ENCODE measurements at regions of chr10 and their contacts with region 1.

Region 1: GRCh38 chr10:124916585-124917427 is 25.1 kb upstream of the ZRANB1 start:
- DNase-seq: peak; percentile 98
- ATAC-seq: peak; percentile 92
- H3K4me3 Mint-ChIP-seq: peak overlapping the region; percentile 84
- H3K27ac Mint-ChIP-seq: peak overlapping the region; percentile 90
- H3K4me1 Mint-ChIP-seq: peaks cover 37% of the 10 kb centered on the region
- H3K27me3 Mint-ChIP-seq: peaks cover 2% of the 10 kb centered on the region
- CTCF ChIP-seq: no peak

Region 2: DNA sequence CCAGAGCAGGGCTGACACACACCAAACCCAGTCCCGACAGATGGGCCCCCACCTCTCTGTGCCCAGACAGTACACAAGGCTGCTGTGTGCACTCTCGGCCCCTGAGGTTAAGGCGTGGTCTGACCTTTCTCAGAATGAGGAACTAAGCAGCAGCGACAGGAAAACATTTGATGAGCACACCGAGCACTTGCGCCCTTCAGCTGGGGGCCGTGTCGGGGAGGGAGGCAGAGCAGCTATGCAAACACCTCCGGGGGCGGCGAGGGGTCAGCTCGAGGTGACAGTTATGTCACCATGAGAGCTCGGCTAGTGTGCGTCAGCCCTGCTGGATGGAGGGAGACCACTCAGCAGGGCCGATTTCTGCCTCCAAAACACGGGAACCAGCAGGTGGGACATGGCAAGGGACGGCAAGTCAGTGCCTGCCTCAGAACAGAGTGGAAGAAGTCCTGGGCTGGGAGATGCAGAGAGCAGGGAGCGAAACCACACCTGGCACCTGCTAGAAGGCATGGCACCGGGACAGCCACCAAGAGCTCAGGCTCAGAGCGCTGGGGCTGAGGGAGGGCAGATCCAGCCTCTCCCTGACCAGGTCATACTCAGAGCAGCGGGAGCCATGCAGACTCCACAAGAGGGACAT is 880.8 kb before region 1 on chr10:
- CTCF ChIA-PET with region 1: no interaction called
- POLR2A ChIA-PET with region 1: no interaction called
- intact Hi-C with region 1: loop called (anchors 1 kb)
- DNase-seq: peak; percentile 75
- ATAC-seq: peak; percentile 93
- H3K4me3 Mint-ChIP-seq: peak overlapping the region; percentile 85
- H3K27ac Mint-ChIP-seq: peak overlapping the region; percentile 95
- H3K4me1 Mint-ChIP-seq: peaks cover 26% of the 10 kb centered on the region
- H3K27me3 Mint-ChIP-seq: no peaks in the 10 kb centered on the region
- CTCF ChIP-seq: no peak

Region 3: GRCh38 chr10:124450012-124450781 is 466.6 kb before region 1 on chr10 and contains the start of gene NKX1-2:
- CTCF ChIA-PET with region 1: no interaction called
- POLR2A ChIA-PET with region 1: no interaction called
- intact Hi-C with region 1: no loop called
- DNase-seq: no peak
- ATAC-seq: peak; percentile 28
- H3K4me3 Mint-ChIP-seq: peak within 1 kb of the TSS; percentile 62
- H3K27ac Mint-ChIP-seq: no peak within 1 kb of the TSS
- H3K4me1 Mint-ChIP-seq: peaks cover 33% of the 10 kb centered on the region
- H3K27me3 Mint-ChIP-seq: peaks cover 71% of the 10 kb centered on the region
- CTCF ChIP-seq: no peak
- total RNA-seq, gene NKX1-2: not detected in 2 replicates

Region 4: DNA sequence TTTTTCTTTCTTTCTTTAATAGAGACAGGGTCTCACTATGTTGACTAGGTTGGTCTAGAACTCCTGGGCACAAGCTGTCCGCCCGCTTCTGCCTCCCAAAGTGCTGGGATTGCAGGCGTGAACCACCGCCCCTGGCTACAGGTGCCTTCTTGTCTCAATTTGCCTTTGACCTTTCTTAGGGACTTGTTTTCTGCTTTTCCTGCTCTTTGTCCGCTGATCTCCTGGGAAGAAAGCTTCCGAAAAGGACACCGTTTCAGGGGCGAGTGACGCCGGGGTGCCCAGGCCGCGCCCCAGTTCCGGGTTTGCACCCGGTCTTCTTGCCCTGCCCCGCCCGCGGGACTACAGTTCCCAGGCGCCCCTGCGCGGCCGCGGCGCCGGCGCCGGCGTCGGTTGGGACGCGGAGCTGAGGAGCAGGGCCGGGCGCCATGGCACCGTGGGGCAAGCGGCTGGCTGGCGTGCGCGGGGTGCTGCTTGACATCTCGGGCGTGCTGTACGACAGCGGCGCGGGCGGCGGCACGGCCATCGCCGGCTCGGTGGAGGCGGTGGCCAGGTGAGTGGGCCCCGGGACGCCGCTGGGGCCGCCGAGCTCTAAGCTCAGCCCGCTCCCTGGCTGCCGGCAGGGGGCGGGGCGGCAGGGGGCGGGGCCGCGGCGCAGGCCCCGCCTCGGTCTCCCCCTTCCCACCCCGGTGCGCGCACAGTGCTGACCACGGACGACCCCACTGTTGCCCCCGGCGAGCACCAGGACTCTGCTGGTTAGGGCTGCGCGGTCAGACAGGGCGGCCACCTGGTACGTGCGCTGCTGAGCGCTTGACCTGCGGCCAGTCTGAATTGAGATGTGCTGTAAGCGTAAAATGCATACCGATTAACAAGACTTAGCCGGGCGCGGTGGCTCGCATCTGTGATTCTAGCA is 455.1 kb before region 1 on chr10 and contains the start of gene LHPP:
- CTCF ChIA-PET with region 1: no interaction called
- POLR2A ChIA-PET with region 1: interaction called, 3 read pairs
- intact Hi-C with region 1: loop called (anchors 1 kb)
- DNase-seq: peak; percentile 91
- ATAC-seq: peak; percentile 92
- H3K4me3 Mint-ChIP-seq: peak within 1 kb of the TSS; percentile 92
- H3K27ac Mint-ChIP-seq: peak within 1 kb of the TSS; percentile 95
- H3K4me1 Mint-ChIP-seq: peaks cover 32% of the 10 kb centered on the region
- H3K27me3 Mint-ChIP-seq: peaks cover 4% of the 10 kb centered on the region
- CTCF ChIP-seq: no peak
- total RNA-seq, gene LHPP: 21.0 and 22.9 TPM in 2 replicates

Region 5: DNA sequence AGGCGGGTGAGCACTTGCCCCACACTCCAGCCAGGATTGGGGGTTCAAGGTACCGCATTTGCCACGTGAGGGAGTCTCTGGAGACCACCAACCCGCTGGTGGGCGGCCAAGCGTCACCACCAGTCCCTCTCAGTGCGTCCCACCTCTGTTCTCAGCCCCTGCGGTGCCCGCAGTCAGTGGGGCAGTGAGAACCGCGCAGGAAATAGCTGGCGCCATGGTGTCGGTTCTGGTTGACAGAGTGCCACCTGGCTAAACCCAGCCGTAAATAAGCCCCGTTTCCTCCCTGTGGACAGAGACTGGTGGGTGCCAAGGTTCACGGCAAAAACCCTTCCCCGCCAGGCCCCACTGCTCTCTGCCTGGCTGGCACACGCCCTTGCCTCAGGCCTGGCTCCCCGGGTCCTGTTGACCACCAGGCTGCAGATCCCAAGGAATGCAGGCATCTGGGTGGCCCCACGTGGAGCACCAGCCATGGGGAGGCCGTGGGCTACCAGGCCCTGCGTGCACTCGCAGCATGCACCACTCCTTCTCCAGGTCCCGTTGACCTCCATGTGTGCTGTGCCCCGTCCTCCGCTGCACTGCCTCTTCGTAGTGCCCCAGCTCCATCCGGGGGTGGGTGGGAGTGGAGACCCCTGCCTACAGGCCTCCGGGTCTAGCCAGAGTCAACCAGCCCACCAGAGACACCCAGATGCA is 315.2 kb before region 1 on chr10:
- CTCF ChIA-PET with region 1: no interaction called
- POLR2A ChIA-PET with region 1: no interaction called
- intact Hi-C with region 1: no loop called
- DNase-seq: peak; percentile 75
- ATAC-seq: peak; percentile 86
- H3K4me3 Mint-ChIP-seq: peak overlapping the region; percentile 70
- H3K27ac Mint-ChIP-seq: peak overlapping the region; percentile 94
- H3K4me1 Mint-ChIP-seq: peaks cover 97% of the 10 kb centered on the region
- H3K27me3 Mint-ChIP-seq: no peaks in the 10 kb centered on the region
- CTCF ChIP-seq: no peak

Region 6: GRCh38 chr10:124791378-124792348 is 125.1 kb before region 1 on chr10 and contains the start of gene EEF1AKMT2:
- CTCF ChIA-PET with region 1: no interaction called
- POLR2A ChIA-PET with region 1: interaction called, 11 read pairs
- intact Hi-C with region 1: loop called (anchors 1 kb)
- DNase-seq: peak; percentile 85
- ATAC-seq: peak; percentile 95
- H3K4me3 Mint-ChIP-seq: peak within 1 kb of the TSS; percentile 96
- H3K27ac Mint-ChIP-seq: peak within 1 kb of the TSS; percentile 91
- H3K4me1 Mint-ChIP-seq: peaks cover 25% of the 10 kb centered on the region
- H3K27me3 Mint-ChIP-seq: no peaks in the 10 kb centered on the region
- CTCF ChIP-seq: no peak
- total RNA-seq, gene EEF1AKMT2: 16.5 and 17.0 TPM in 2 replicates

Region 7: DNA sequence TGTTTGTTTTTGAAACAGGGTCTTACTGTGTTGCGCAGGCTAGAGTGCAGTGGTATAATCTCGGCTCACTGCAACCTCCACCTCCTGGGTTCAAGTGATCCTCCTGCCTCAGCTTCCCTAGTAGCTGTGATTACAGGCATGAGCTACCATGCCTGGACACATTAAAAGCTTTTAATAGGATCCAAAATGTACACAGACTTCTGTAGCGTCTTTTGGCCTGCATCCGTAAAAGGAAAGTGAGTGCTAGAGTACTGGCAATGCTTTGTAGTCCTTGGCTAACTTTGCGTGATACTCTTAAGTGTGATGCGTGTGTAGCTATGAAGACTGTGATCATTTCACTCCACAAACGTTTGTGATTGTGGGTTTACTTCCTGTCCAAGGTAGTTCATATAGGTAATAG is 38.4 kb after region 1 on chr10:
- CTCF ChIA-PET with region 1: no interaction called
- POLR2A ChIA-PET with region 1: no interaction called
- intact Hi-C with region 1: loop called (anchors 5 kb)
- DNase-seq: no peak
- ATAC-seq: no peak
- H3K4me3 Mint-ChIP-seq: no peak overlapping the region
- H3K27ac Mint-ChIP-seq: no peak overlapping the region
- H3K4me1 Mint-ChIP-seq: peaks cover 49% of the 10 kb centered on the region
- H3K27me3 Mint-ChIP-seq: no peaks in the 10 kb centered on the region
- CTCF ChIP-seq: no peak

Region 8: GRCh38 chr10:125084191-125084613 is 167.4 kb after region 1 on chr10:
- CTCF ChIA-PET with region 1: no interaction called
- POLR2A ChIA-PET with region 1: no interaction called
- intact Hi-C with region 1: no loop called
- DNase-seq: no peak
- ATAC-seq: no peak
- H3K4me3 Mint-ChIP-seq: no peak overlapping the region
- H3K27ac Mint-ChIP-seq: no peak overlapping the region
- H3K4me1 Mint-ChIP-seq: no peaks in the 10 kb centered on the region
- H3K27me3 Mint-ChIP-seq: peaks cover 57% of the 10 kb centered on the region
- CTCF ChIP-seq: no peak

Region 9: GRCh38 chr10:125248489-125248888 is 331.7 kb after region 1 on chr10:
- CTCF ChIA-PET with region 1: no interaction called
- POLR2A ChIA-PET with region 1: no interaction called
- intact Hi-C with region 1: no loop called
- DNase-seq: no peak
- ATAC-seq: no peak
- H3K4me3 Mint-ChIP-seq: no peak overlapping the region
- H3K27ac Mint-ChIP-seq: no peak overlapping the region
- H3K4me1 Mint-ChIP-seq: no peaks in the 10 kb centered on the region
- H3K27me3 Mint-ChIP-seq: no peaks in the 10 kb centered on the region
- CTCF ChIP-seq: no peak

Region 10: DNA sequence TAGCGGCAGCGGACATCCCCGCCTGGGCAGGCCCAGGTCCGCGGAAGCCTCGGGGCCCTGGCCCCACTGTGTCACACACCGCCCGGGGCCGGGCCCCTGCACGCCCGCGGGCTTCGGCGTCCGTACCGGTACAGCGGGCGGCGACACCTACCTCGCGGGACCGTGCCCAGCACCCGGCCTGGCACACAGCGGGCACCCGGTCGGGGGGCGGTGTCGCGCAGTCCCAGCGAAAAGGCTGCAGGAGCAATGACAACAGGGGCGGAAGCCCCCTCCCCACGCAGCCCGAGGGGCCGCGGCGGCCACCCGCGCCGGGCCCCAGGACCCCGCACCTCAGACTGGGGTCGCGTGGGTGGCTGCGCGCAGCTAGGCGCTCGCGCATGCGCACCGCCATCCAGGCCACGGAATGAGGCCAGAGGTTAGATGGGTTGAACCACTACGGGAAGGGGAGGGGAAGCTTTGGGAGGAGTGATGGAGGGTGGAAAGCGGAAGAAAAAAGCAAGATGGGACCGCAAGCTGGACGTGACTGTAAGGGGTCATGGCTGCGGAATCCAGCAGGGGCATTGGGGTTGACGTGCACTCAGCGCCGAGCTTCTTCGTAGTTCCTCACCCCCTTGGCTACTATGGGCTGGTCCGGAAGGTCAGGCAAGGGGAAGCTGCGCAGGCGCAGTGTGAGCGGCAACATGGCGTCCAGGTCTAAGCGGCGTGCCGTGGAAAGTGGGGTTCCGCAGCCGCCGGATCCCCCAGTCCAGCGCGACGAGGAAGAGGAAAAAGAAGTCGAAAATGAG is 906.3 kb after region 1 on chr10 and contains the starts of genes BCCIP and UROS:
- CTCF ChIA-PET with region 1: no interaction called
- POLR2A ChIA-PET with region 1: no interaction called
- intact Hi-C with region 1: loop called (anchors 5 kb)
- DNase-seq: peak; percentile 86
- ATAC-seq: peak; percentile 87
- H3K4me3 Mint-ChIP-seq: peak within 1 kb of the TSS; percentile 78
- H3K27ac Mint-ChIP-seq: peak within 1 kb of the TSS; percentile 46
- H3K4me1 Mint-ChIP-seq: peaks cover 36% of the 10 kb centered on the region
- H3K27me3 Mint-ChIP-seq: no peaks in the 10 kb centered on the region
- CTCF ChIP-seq: no peak
- total RNA-seq, gene BCCIP: 63.6 and 64.9 TPM in 2 replicates
- total RNA-seq, gene UROS: 34.1 and 34.9 TPM in 2 replicates